ENCODE measurements at regions of chr3 and their contacts with region 1.

Region 1: GRCh38 chr3:134364061-134364935 is 9.9 kb downstream of the AMOTL2 start:
- DNase-seq: peak; percentile 98
- H3K4me3 ChIP-seq: peak overlapping the region; percentile 37 to 54 (median 41)
- H3K27ac ChIP-seq: peak overlapping the region; percentile 97 to 100 (median 98)
- H3K4me1 ChIP-seq: peaks cover 98 to 100% (median 99%) of the 10 kb centered on the region in 4 donors
- H3K27me3 ChIP-seq: no peaks in the 10 kb centered on the region
- CTCF ChIP-seq: no peak
- EP300 ChIP-seq: no peak
- POLR2A ChIP-seq: no peak

Region 2: GRCh38 chr3:134315286-134316106 is 48.8 kb before region 1 on chr3:
- intact Hi-C with region 1: loop called (anchors 2 kb)
- DNase-seq: no peak
- H3K4me3 ChIP-seq: no peak overlapping the region
- H3K27ac ChIP-seq: peak overlapping the region; percentile 91 to 99 (median 92)
- H3K4me1 ChIP-seq: peaks cover 50 to 69% (median 60%) of the 10 kb centered on the region in 4 donors
- H3K27me3 ChIP-seq: no peaks in the 10 kb centered on the region
- CTCF ChIP-seq: no peak
- EP300 ChIP-seq: no peak
- POLR2A ChIP-seq: no peak

Region 3: DNA sequence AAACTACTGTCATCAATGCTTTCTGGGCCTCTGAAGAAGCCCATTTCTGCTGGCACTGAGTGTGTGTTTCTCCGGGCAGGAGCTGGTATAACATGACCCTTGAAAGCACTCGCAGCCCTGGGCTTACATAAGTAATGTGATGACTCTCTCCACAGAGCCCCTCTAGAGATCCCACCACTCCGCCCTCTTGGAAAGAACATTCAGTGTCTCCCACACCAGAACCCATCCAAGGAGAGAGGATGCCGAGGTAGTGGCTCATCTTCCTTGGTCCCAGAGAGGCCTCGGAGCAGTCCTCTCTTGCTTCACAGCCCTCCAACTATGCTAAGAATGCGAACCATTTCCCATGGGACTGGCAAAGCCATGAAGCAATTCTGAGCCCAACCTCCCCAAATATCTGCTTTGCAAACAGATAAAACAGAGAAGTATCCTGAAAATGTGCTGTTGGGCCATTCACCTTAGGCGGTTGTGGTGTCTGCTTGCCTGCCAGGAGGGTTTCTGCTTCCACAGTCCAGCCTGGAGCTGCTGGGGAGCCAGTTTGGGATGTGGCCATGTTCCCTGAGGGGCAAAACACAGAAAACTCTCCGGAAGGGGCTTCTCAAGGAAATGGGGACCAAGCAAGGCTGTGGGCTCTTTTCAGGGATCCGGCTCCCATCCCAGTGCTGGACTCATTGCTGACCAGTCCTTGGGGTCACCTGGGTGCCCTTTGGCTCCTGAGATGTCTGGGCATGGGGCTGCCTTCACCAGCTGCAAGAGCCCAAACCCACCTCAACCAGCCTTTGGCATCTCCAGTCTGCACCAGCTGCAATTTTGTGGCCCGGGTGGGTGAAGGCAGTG is 37.3 kb before region 1 on chr3:
- intact Hi-C with region 1: loop called (anchors 2 kb)
- DNase-seq: no peak
- H3K4me3 ChIP-seq: no peak overlapping the region
- H3K27ac ChIP-seq: peak overlapping the region; percentile 74 to 93 (median 82)
- H3K4me1 ChIP-seq: peaks cover 49 to 68% (median 64%) of the 10 kb centered on the region in 4 donors
- H3K27me3 ChIP-seq: no peaks in the 10 kb centered on the region
- CTCF ChIP-seq: no peak
- EP300 ChIP-seq: peak; percentile 22
- POLR2A ChIP-seq: no peak